Caco-2 (cell line): ENCODE measurements at regions of chr12 and their contacts with region 1.

Region 1: DNA sequence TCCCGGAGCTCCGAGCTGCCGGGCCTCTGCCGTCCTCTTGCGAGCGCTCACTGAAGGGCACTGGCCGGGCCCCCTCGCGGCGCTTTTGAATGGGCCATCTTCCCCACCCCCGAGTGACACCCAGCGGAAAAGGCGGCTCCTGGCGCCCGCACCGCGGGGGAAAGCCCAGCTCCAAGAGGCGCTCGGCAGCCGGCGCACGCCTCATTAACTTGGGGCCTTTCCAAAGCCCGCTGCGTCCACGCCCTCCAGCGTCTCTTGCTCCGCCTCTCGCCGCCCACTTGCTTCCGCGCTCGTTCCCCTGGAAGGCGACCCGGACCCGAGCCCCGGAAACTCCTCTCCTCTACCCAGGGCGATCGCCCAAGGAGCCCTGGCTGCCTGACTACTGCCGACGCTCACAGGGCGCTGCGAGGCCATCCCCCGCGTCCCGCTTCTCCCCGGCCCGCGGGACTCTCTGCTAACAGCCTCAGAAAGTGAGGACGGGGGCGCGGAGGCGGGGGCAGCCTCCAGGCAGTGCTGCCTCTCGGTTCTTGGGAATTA is at the start of gene PHLDA1:
- DNase-seq: peak; percentile 97 to 98
- H3K4me3 ChIP-seq: peak within 1 kb of the TSS; percentile 97
- H3K4me3 Mint-ChIP-seq: peak within 1 kb of the TSS; percentile 86
- H3K27ac Mint-ChIP-seq: peak within 1 kb of the TSS; percentile 90
- H3K4me1 ChIP-seq: peaks cover 19% of the 10 kb centered on the region
- H3K4me1 Mint-ChIP-seq: peaks cover 25% of the 10 kb centered on the region
- H3K27me3 ChIP-seq: no peaks in the 10 kb centered on the region
- H3K27me3 Mint-ChIP-seq: no peaks in the 10 kb centered on the region
- CTCF ChIP-seq: peak; percentile 63 to 85
- total RNA-seq, gene PHLDA1: 46.2 and 47.2 TPM in 2 replicates

Region 2: DNA sequence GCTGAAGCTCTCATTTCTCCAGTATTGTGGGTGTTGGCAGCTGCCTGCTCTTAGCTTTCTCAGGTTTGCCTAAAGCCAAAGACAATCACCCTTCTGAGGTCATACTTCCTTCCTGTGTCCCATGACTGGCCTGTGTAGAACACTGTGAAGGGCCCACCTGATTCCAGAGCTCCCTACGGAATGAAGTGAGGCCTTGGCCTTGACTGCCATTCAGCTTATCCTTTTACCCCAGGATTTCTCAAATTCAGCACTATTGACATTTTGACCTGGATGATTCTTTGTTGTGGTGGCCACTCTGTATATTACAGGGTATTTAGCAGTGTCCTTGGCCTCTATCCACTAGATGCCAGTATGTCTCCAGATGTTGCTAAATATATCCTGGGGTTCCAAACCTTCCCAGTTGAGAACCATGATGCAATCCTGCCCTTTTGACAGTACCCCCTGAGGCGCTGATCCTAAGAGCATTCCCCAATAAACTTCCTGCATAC is 407.9 kb before region 1 on chr12:
- CTCF ChIA-PET with region 1: interaction called, 3 read pairs
- POLR2A ChIA-PET with region 1: no interaction called
- intact Hi-C with region 1: loop called (anchors 1 kb)
- DNase-seq: peak; percentile 46 to 50
- H3K4me3 ChIP-seq: no peak overlapping the region
- H3K4me3 Mint-ChIP-seq: no peak overlapping the region
- H3K27ac Mint-ChIP-seq: peak overlapping the region; percentile 76
- H3K4me1 ChIP-seq: peaks cover 17% of the 10 kb centered on the region
- H3K4me1 Mint-ChIP-seq: peaks cover 20% of the 10 kb centered on the region
- H3K27me3 ChIP-seq: no peaks in the 10 kb centered on the region
- H3K27me3 Mint-ChIP-seq: no peaks in the 10 kb centered on the region
- CTCF ChIP-seq: peak; percentile 20 to 51

Region 3: DNA sequence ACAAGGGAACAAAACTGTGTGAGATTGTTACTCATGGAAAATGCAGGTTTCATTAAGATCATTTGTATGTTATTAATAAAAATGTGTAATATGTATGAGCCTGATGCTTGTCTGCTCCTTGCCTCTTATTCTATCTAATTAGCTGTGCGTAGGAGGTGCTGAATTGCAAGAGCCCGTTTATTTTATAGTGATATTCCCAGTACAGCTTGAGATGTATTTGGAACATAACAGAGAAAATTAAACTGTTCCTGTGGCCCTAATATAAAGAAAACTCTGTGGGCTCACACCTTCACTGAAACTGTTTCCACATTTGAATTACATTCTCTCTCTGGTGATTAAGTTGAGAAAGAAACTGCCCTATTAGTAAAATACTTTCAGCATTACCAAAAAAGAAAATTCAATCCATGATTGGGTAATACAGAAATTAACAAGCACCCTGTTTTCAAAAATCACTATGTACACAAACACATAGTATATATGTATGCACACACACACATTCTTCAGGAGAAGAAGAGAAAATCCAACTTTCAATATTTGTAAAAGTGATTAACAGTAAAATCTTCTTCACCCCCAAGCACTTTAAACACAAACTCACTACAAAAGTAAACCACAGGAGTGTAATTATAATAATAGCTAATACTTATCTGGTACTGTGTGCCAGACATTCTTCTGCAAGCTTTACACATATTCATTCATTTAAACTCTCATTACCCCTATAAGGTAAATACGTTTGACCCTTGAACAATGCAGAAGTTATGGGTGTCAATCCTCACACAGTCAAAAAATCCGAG is 233.3 kb before region 1 on chr12:
- CTCF ChIA-PET with region 1: interaction called, 3 read pairs
- POLR2A ChIA-PET with region 1: no interaction called
- intact Hi-C with region 1: loop called (anchors 5 kb)
- DNase-seq: peak in 1 of 2 experiments; percentile 26
- H3K4me3 ChIP-seq: no peak overlapping the region
- H3K4me3 Mint-ChIP-seq: no peak overlapping the region
- H3K27ac Mint-ChIP-seq: no peak overlapping the region
- H3K4me1 ChIP-seq: peaks cover 9% of the 10 kb centered on the region; the same call in 1 of the 2 replicates
- H3K4me1 Mint-ChIP-seq: no peaks in the 10 kb centered on the region
- H3K27me3 ChIP-seq: no peaks in the 10 kb centered on the region
- H3K27me3 Mint-ChIP-seq: no peaks in the 10 kb centered on the region
- CTCF ChIP-seq: no peak

Region 4: DNA sequence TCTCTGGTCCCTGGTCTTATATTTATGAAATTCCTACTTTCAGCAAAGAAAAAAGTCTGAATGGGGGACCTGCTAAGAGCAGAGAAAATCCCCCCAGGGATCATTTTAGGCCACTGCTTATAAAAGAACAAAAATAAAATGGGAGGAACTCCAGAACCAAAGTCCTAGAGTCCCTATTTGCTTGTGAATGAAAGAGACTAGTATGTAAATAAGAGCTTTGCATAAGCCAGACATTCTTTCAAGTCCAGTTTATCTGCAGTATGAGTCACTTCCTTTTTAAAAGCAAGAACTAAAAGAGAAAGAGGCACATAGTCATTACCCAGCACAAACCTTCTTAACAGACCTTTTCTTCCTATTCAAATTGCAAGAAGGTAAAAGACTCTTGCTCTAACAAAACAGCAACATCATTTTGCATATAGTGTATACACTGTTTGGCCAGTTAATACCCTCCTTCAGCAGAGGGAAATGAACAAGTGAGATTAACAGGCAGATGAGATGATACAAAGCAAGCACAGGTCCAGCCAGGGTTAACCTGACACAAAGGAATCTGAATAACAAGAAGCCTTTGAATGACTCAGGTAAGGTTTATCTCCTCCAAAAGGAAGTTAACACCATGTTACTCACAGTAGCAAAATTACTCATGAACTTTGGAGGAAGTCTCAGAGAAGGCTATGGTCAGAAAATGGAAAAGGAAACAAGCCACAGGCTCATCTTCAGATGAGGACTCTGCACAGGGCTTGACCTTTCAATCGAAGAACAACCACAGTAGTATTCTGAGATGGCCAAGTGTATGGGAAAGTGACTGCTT is 87.3 kb before region 1 on chr12:
- CTCF ChIA-PET with region 1: interaction called, 3 read pairs
- POLR2A ChIA-PET with region 1: interaction called, 5 read pairs
- intact Hi-C with region 1: loop called (anchors 1 kb)
- DNase-seq: peak in 1 of 2 experiments; percentile 53
- H3K4me3 ChIP-seq: no peak overlapping the region
- H3K4me3 Mint-ChIP-seq: peak overlapping the region; percentile 57
- H3K27ac Mint-ChIP-seq: peak overlapping the region; percentile 33
- H3K4me1 ChIP-seq: peaks cover 45% of the 10 kb centered on the region
- H3K4me1 Mint-ChIP-seq: peaks cover 22% of the 10 kb centered on the region
- H3K27me3 ChIP-seq: no peaks in the 10 kb centered on the region
- H3K27me3 Mint-ChIP-seq: no peaks in the 10 kb centered on the region
- CTCF ChIP-seq: no peak

Region 5: GRCh38 chr12:75990189-75990912 is 41.3 kb before region 1 on chr12:
- CTCF ChIA-PET with region 1: interaction called, 10 read pairs
- POLR2A ChIA-PET with region 1: interaction called, 12 read pairs
- intact Hi-C with region 1: loop called (anchors 1 kb)
- DNase-seq: peak in 1 of 2 experiments; percentile 77
- H3K4me3 ChIP-seq: no peak overlapping the region
- H3K4me3 Mint-ChIP-seq: peak overlapping the region; percentile 18
- H3K27ac Mint-ChIP-seq: peak overlapping the region; percentile 89
- H3K4me1 ChIP-seq: peaks cover 79% of the 10 kb centered on the region
- H3K4me1 Mint-ChIP-seq: peaks cover 46% of the 10 kb centered on the region
- H3K27me3 ChIP-seq: no peaks in the 10 kb centered on the region
- H3K27me3 Mint-ChIP-seq: no peaks in the 10 kb centered on the region
- CTCF ChIP-seq: no peak